Endothelial cell of umbilical vein (primary cell): ENCODE measurements at regions of chr7 and their contacts with region 1.

Region 1: GRCh38 chr7:29408841-29409243 is 154.8 kb upstream of the PRR15 start:
- DNase-seq: peak; percentile 73
- H3K4me3 ChIP-seq: no peak overlapping the region
- H3K27ac ChIP-seq: no peak overlapping the region
- H3K4me1 ChIP-seq: no peaks in the 10 kb centered on the region
- H3K27me3 ChIP-seq: no peaks in the 10 kb centered on the region
- CTCF ChIP-seq: peak; percentile 61 to 67
- POLR2A ChIP-seq: no peak

Region 2: GRCh38 chr7:28890137-28890536 is 518.7 kb before region 1 on chr7:
- CTCF ChIA-PET with region 1: no interaction called
- POLR2A ChIA-PET with region 1: no interaction called
- dilution Hi-C with region 1: no loop called
- intact Hi-C with region 1: no loop called
- DNase-seq: no peak
- H3K4me3 ChIP-seq: no peak overlapping the region
- H3K27ac ChIP-seq: no peak overlapping the region
- H3K4me1 ChIP-seq: no peaks in the 10 kb centered on the region
- H3K27me3 ChIP-seq: peaks cover 5 to 6% of the 10 kb centered on the region in 2 experiments
- CTCF ChIP-seq: no peak
- POLR2A ChIP-seq: no peak

Region 3: GRCh38 chr7:28926871-28927597 is 481.8 kb before region 1 on chr7:
- CTCF ChIA-PET with region 1: interaction called, 234 read pairs
- POLR2A ChIA-PET with region 1: no interaction called
- dilution Hi-C with region 1: no loop called
- intact Hi-C with region 1: loop called (anchors 1 kb)
- DNase-seq: peak; percentile 83
- H3K4me3 ChIP-seq: peak overlapping the region; percentile 29 to 75 (median 70)
- H3K27ac ChIP-seq: no peak overlapping the region
- H3K4me1 ChIP-seq: no peaks in the 10 kb centered on the region
- H3K27me3 ChIP-seq: peaks cover 4 to 6% of the 10 kb centered on the region in 2 experiments
- CTCF ChIP-seq: peak; percentile 67 to 81
- POLR2A ChIP-seq: no peak

Region 4: GRCh38 chr7:29105752-29106668 is 302.8 kb before region 1 on chr7:
- CTCF ChIA-PET with region 1: interaction called, 61 read pairs
- POLR2A ChIA-PET with region 1: no interaction called
- dilution Hi-C with region 1: no loop called
- intact Hi-C with region 1: loop called (anchors 1 kb)
- DNase-seq: peak; percentile 66
- H3K4me3 ChIP-seq: no peak overlapping the region
- H3K27ac ChIP-seq: no peak overlapping the region
- H3K4me1 ChIP-seq: no peaks in the 10 kb centered on the region
- H3K27me3 ChIP-seq: peaks cover 8 to 13% of the 10 kb centered on the region in 2 experiments
- CTCF ChIP-seq: peak; percentile 69 to 75
- POLR2A ChIP-seq: no peak

Region 5: GRCh38 chr7:29119538-29120199 is 289.2 kb before region 1 on chr7:
- CTCF ChIA-PET with region 1: interaction called, 10 read pairs
- POLR2A ChIA-PET with region 1: no interaction called
- dilution Hi-C with region 1: no loop called
- intact Hi-C with region 1: no loop called
- DNase-seq: no peak
- H3K4me3 ChIP-seq: no peak overlapping the region
- H3K27ac ChIP-seq: no peak overlapping the region
- H3K4me1 ChIP-seq: peaks cover 9% of the 10 kb centered on the region
- H3K27me3 ChIP-seq: no peaks in the 10 kb centered on the region
- CTCF ChIP-seq: no peak
- POLR2A ChIP-seq: no peak

Region 6: DNA sequence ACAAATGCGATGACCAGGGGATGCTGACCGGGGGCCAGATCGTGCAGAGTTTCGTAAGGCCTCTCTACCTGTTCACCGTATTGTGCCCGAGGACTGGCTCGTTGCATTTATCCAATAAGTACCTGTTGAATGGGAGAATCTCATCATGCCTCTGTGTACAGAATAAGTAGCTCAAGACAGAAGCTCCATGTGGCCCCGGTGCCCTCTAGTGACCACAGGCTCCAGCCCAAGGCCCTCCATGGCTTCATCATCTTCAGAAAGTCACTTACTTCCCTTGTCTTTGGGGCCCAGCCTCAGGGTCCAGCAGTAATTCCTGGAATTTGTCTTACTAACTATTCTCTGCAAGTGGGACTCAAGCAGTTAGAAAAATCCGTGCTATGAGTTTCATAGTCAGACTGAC is 63.2 kb before region 1 on chr7:
- CTCF ChIA-PET with region 1: interaction called, 10 read pairs
- POLR2A ChIA-PET with region 1: no interaction called
- dilution Hi-C with region 1: no loop called
- intact Hi-C with region 1: no loop called
- DNase-seq: peak; percentile 41
- H3K4me3 ChIP-seq: no peak overlapping the region
- H3K27ac ChIP-seq: no peak overlapping the region
- H3K4me1 ChIP-seq: no peaks in the 10 kb centered on the region
- H3K27me3 ChIP-seq: peaks cover 1 to 5% of the 10 kb centered on the region in 2 experiments
- CTCF ChIP-seq: peak; percentile 45 to 49
- POLR2A ChIP-seq: no peak

Region 7: GRCh38 chr7:29463504-29464158 is 54.8 kb after region 1 on chr7:
- CTCF ChIA-PET with region 1: no interaction called
- POLR2A ChIA-PET with region 1: no interaction called
- dilution Hi-C with region 1: no loop called
- intact Hi-C with region 1: no loop called
- DNase-seq: no peak
- H3K4me3 ChIP-seq: no peak overlapping the region
- H3K27ac ChIP-seq: no peak overlapping the region
- H3K4me1 ChIP-seq: peaks cover 8% of the 10 kb centered on the region
- H3K27me3 ChIP-seq: peaks cover 0 to 1% of the 10 kb centered on the region in 2 experiments
- CTCF ChIP-seq: no peak
- POLR2A ChIP-seq: no peak